HEK293T (cell line): ENCODE measurements at regions of chr16 and their contacts with region 1.

Region 1: DNA sequence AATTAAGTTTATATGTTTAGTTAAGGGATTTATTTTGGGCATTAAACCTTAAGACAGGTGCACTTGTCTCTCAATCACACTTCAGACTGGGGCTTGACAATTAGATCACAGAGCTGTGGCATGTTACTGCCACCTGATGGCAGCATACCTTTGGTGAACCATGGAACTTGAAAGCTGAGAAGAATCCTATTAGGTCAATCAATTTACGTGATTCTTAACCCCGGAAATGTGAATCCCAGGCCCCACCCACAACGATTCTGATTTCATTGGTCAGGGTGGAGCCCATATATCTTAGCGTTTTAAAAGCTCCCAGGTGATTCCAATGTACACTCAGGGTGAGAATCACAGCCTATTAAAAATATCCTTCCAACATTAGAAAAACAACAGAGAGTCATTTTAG is 91.0 kb downstream of the GSG1L start:
- DNase-seq: peak; percentile 46

Region 2: DNA sequence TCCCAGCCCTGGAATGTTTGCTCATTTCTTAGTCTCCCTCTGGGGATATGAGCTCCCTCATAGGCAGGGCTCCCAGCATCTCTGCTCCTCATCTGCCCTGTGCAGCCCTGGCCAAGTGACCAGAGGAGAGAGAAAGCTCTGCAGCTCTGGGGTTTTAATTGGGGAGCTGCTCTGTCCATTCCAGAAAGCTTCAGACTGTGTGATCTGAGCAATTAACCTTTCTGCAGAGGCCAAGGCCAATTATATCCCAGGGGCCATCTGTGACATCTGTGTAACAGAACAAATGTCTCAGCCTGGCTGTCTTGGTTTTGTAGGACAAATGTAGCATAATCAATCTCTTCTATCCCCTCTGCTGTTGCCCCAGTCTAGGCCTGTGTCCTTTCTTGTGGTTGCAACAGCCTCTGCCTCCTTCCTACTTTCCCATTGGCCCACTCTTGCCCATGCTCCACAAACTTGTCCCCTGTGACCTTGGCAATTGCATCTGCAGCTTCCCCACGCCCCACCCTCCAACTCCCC is 65.0 kb before region 1 on chr16:
- CTCF ChIA-PET with region 1: no interaction called
- POLR2A ChIA-PET with region 1: no interaction called
- DNase-seq: no peak

Region 3: GRCh38 chr16:27960619-27961295 is 11.7 kb before region 1 on chr16:
- CTCF ChIA-PET with region 1: no interaction called
- POLR2A ChIA-PET with region 1: no interaction called
- DNase-seq: no peak

Region 4: GRCh38 chr16:28069971-28070794 is 97.7 kb after region 1 on chr16:
- CTCF ChIA-PET with region 1: interaction called, 10 read pairs
- POLR2A ChIA-PET with region 1: no interaction called
- DNase-seq: no peak